GM13977 (cell line): ENCODE measurements at regions of chr16 and their contacts with region 1.

Region 1: DNA sequence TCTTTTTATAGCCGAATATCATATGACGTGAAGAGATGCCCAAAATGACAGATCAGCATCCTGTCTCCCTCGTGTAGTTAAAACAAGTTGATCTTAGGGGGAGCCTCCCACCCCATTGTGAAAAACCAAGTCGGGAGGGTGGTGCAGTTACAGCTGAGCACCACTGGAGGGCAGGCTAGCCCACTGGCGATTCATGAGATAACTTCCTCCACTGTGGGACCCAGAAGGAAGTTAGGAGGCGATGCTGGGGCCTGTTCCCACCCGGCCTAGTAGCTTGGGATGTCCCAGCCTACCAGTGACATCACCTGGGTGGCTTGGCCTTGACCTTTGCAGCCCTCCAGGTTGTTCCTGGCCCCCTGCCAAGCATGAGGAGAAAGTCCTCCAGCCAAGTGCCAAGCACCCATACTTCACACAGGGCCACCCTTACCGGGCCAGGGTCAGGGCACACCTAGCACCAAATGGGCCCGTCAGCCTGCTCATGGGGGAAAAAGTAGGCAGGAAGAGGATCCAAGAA is 8.1 kb upstream of the CPNE2 start:
- DNase-seq: peak; percentile 88
- CTCF ChIP-seq: peak; percentile 97

Region 2: DNA sequence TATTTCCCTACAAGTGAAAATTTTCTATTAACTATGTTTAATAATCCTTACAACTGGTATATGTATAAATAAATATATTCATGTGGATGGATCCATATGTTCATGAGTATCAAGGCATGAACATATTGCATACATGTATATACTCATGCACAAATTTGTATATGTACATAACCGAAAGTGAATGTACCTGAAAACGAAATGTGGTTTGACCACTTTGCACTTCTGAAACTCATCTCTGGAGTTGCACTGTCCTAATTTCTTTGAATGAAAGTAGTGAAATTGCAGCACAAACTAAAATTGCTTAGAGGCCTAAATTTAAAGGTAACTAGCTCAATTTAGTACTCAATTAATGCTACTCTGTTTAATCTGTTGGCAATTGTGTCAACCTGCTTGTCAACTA is 920.4 kb before region 1 on chr16:
- in situ Hi-C with region 1: no loop called
- DNase-seq: peak; percentile 19
- CTCF ChIP-seq: no peak

Region 3: GRCh38 chr16:57167953-57168352 is 83.6 kb after region 1 on chr16:
- in situ Hi-C with region 1: loop called (anchors 10 kb)
- DNase-seq: peak; percentile 59
- CTCF ChIP-seq: peak; percentile 64

Region 4: GRCh38 chr16:57422026-57422944 is 338.0 kb after region 1 on chr16:
- in situ Hi-C with region 1: loop called (anchors 25 kb)
- DNase-seq: no peak
- CTCF ChIP-seq: peak; percentile 37